ENCODE measurements at regions of chr7 and their contacts with region 1.

Region 1: GRCh38 chr7:26365077-26365900 is 73.6 kb downstream of the SNX10 start:
- DNase-seq: peak; percentile 76
- ATAC-seq: peak; percentile 74
- H3K4me3 ChIP-seq: no peak overlapping the region
- H3K27ac ChIP-seq: no peak overlapping the region
- H3K4me1 ChIP-seq: peaks cover 9% of the 10 kb centered on the region
- H3K27me3 ChIP-seq: no peaks in the 10 kb centered on the region
- CTCF ChIP-seq: peak; percentile 86

Region 2: GRCh38 chr7:26078437-26079336 is 286.6 kb before region 1 on chr7:
- CTCF ChIA-PET with region 1: interaction called, 3 read pairs
- POLR2A ChIA-PET with region 1: no interaction called
- intact Hi-C with region 1: loop called (anchors 1 kb)
- DNase-seq: peak; percentile 69
- ATAC-seq: peak; percentile 92
- H3K4me3 ChIP-seq: peak overlapping the region; percentile 42; the same call in 1 of the 2 replicates
- H3K27ac ChIP-seq: no peak overlapping the region
- H3K4me1 ChIP-seq: peaks cover 30% of the 10 kb centered on the region
- H3K27me3 ChIP-seq: no peaks in the 10 kb centered on the region
- CTCF ChIP-seq: peak; percentile 71

Region 3: DNA sequence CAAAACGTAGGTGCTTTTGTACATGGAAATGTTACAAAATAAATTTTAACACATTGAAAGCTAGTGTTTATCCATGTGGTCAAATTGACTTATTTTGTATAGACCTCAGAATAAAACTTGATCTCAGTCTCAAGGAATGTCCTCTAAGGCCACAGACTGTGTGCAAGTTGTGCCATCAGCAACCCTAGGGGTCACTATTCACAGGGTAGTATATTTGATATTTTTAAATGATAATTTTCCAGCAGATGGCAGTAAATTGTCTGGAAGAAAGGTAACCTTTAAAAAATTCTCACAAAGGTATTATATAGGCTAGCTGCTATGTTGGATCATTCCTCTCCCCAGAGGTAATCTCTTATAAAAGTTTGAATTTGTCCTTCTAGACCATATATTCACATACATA is 86.5 kb before region 1 on chr7:
- CTCF ChIA-PET with region 1: interaction called, 5 read pairs
- POLR2A ChIA-PET with region 1: no interaction called
- intact Hi-C with region 1: loop called (anchors 1 kb)
- DNase-seq: peak; percentile 65
- ATAC-seq: peak; percentile 98
- H3K4me3 ChIP-seq: no peak overlapping the region
- H3K27ac ChIP-seq: no peak overlapping the region
- H3K4me1 ChIP-seq: no peaks in the 10 kb centered on the region
- H3K27me3 ChIP-seq: no peaks in the 10 kb centered on the region
- CTCF ChIP-seq: peak; percentile 79

Region 4: DNA sequence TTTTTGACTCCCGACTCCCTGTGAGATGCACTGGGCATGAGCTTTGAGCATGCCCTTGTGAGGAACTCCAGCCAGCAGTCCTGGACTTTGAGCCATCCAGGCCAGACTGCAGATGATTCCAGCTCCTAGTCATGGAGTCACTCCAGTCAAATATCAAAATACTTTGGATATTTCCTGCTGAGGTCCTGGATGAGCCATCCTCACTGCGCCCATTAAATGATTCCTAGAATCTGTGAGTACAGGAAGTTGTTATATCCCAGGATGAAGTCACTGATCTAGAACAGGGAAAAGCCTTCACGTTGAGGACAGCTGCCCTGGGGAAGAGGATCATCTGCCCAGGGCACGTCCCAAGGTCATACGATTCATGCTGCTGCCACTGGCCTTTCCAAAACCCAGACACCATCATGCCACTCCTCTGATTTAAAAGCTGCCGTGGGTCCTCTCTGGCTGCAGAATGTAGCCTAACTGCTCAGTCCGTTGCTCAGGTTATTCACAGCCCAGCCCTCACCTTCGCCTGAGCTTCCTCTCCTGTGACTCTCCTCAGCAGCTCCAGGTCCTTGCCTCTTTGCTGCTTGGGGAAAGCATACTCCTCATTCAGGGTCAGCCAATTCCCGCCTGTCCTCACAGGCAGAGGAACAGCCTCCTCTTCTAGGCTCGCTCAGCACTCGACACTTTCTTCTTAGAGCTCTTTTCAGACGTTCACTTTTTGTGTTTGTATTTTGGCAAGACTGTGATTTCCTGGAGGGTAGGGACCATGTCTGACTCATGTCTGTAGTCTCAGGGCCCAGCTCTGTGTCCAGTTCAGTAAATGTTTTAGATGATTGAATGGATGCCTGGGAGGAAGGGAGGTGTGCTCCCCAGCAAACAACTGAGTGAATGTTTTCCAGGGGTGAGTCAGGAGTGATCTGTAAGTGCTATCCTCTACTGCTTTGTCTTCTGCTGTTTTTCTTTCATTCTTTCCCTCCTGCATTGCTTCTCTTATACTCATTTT is 84.2 kb after region 1 on chr7:
- CTCF ChIA-PET with region 1: interaction called, 10 read pairs
- POLR2A ChIA-PET with region 1: no interaction called
- intact Hi-C with region 1: no loop called
- DNase-seq: peak; percentile 81
- ATAC-seq: peak; percentile 96
- H3K4me3 ChIP-seq: peak overlapping the region; percentile 40
- H3K27ac ChIP-seq: peak overlapping the region; percentile 72
- H3K4me1 ChIP-seq: peaks cover 33% of the 10 kb centered on the region
- H3K27me3 ChIP-seq: no peaks in the 10 kb centered on the region
- CTCF ChIP-seq: no peak

Region 5: DNA sequence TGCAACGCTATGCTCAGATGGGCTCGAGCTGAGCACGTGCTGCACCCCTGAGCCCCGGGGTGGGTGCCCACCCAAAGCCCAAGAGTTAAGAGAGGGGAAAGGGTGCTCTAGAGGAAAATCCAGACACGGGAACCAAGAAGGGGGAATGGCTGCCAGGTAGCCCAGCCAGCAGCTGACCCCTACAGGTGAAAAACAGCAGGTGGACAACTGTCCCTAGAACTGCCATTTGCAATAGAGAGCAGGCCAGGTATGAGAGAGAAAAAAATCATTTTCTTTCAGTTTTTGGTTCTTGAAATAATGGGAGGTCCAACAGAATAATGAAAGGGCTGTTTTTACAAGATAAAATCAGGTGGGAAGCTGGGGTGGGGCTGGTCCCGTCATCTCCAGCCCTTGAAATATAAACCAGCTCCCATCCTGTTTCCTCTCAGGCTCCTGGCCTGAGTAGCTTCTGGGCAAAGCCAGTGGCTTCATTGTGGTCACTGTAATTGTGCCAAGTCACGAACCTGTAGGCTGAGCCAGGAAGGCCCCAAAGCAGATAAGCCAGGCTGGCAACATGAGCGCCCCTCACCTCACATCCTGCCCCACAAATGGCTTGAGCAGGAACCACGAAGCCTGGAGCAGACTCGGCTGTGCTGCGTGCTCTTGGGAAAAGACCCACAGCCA is 184.1 kb after region 1 on chr7:
- CTCF ChIA-PET with region 1: interaction called, 10 read pairs
- POLR2A ChIA-PET with region 1: no interaction called
- intact Hi-C with region 1: loop called (anchors 5 kb)
- DNase-seq: peak; percentile 98
- ATAC-seq: peak; percentile 89
- H3K4me3 ChIP-seq: peak overlapping the region; percentile 35
- H3K27ac ChIP-seq: peak overlapping the region; percentile 100
- H3K4me1 ChIP-seq: peaks cover 52% of the 10 kb centered on the region
- H3K27me3 ChIP-seq: no peaks in the 10 kb centered on the region
- CTCF ChIP-seq: peak; percentile 39; the same call in 1 of the 2 replicates

Region 6: GRCh38 chr7:26675143-26675887 is 310.0 kb after region 1 on chr7:
- CTCF ChIA-PET with region 1: interaction called, 16 read pairs
- POLR2A ChIA-PET with region 1: no interaction called
- intact Hi-C with region 1: no loop called
- DNase-seq: peak; percentile 90
- ATAC-seq: peak; percentile 98
- H3K4me3 ChIP-seq: no peak overlapping the region
- H3K27ac ChIP-seq: peak overlapping the region; percentile 39
- H3K4me1 ChIP-seq: peaks cover 29% of the 10 kb centered on the region
- H3K27me3 ChIP-seq: no peaks in the 10 kb centered on the region
- CTCF ChIP-seq: no peak

Measured in PC-3 (cell line).